SK-N-SH (cell line): ENCODE measurements at regions of chr3 and their contacts with region 1.

Region 1: GRCh38 chr3:128969993-128970739 is 23.7 kb downstream of the CFAP92 start:
- DNase-seq: peak; percentile 67
- H3K4me3 ChIP-seq: no peak overlapping the region
- H3K27ac ChIP-seq: no peak overlapping the region
- H3K4me1 ChIP-seq: no peaks in the 10 kb centered on the region; a peak in 1 of 4 replicates
- H3K27me3 ChIP-seq: peaks cover 8% of the 10 kb centered on the region; the same call in 1 of the 2 replicates
- CTCF ChIP-seq: peak; percentile 97
- EP300 ChIP-seq: no peak
- RAD21 ChIP-seq: peak; percentile 95

Region 2: DNA sequence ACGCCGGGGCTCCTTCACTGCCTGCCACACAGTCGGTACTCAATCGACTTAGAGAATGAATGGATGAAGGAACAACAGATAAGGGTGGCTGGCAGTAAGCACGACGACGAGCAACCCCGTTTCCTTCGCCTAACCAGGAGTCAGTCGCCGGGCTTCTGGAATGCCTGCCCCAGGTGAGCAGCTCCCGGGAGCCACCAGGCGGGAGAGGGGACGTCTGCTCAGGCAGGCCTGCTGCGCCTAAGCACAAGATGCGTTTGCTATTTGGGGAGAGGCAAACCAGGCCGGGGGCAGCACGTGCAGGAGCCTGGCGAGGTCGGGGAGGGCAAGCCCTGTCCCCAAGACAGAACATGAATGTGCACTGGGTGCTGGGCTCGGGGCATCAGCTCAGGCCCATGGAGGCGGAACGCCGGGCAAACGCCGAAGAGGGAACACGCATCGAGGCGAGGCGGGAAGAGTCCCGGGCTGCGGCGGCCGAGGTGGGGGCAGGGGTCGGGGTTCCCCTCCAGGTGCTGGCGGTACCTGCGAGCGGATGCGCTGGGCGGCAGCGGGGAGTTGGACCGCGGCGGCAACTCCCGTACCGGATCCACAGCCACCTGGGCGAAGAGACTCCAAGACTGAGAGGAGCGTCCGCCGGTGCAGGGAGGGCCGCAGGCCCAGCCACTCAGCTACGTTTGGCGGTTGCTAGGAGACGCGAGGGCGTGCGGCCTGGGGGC is 23.5 kb after region 1 on chr3 and contains the start of gene CFAP92:
- CTCF ChIA-PET with region 1: interaction called, 43 read pairs
- POLR2A ChIA-PET with region 1: no interaction called
- DNase-seq: peak; percentile 97
- H3K4me3 ChIP-seq: peak within 1 kb of the TSS; percentile 43 to 52
- H3K27ac ChIP-seq: no peak within 1 kb of the TSS
- H3K4me1 ChIP-seq: peaks cover 0 to 15% of the 10 kb centered on the region in 2 experiments; a peak in 1 of 4 replicates
- H3K27me3 ChIP-seq: peaks cover 21% of the 10 kb centered on the region
- CTCF ChIP-seq: no peak
- EP300 ChIP-seq: no peak
- RAD21 ChIP-seq: no peak
- polyA plus RNA-seq, gene CFAP92: not detected in 2 replicates

Region 3: GRCh38 chr3:129039271-129040038 is 69.3 kb after region 1 on chr3:
- CTCF ChIA-PET with region 1: interaction called, 17 read pairs
- POLR2A ChIA-PET with region 1: no interaction called
- DNase-seq: peak; percentile 88
- H3K4me3 ChIP-seq: no peak overlapping the region; a peak in 1 of 4 replicates
- H3K27ac ChIP-seq: peak overlapping the region in 1 of 2 experiments; percentile 43; a peak in 1 of 4 replicates
- H3K4me1 ChIP-seq: peaks cover 0 to 15% of the 10 kb centered on the region in 2 experiments; a peak in 1 of 4 replicates
- H3K27me3 ChIP-seq: peaks cover 5% of the 10 kb centered on the region; the same call in 1 of the 2 replicates
- CTCF ChIP-seq: no peak
- EP300 ChIP-seq: no peak
- RAD21 ChIP-seq: no peak

Region 4: GRCh38 chr3:129095285-129095684 is 125.1 kb after region 1 on chr3:
- CTCF ChIA-PET with region 1: interaction called, 18 read pairs
- POLR2A ChIA-PET with region 1: no interaction called
- DNase-seq: no peak
- H3K4me3 ChIP-seq: no peak overlapping the region
- H3K27ac ChIP-seq: no peak overlapping the region
- H3K4me1 ChIP-seq: no peaks in the 10 kb centered on the region
- H3K27me3 ChIP-seq: no peaks in the 10 kb centered on the region
- CTCF ChIP-seq: no peak
- EP300 ChIP-seq: no peak
- RAD21 ChIP-seq: no peak

Region 5: GRCh38 chr3:129132097-129132866 is 162.1 kb after region 1 on chr3:
- CTCF ChIA-PET with region 1: interaction called, 14 read pairs
- POLR2A ChIA-PET with region 1: no interaction called
- DNase-seq: no peak
- H3K4me3 ChIP-seq: no peak overlapping the region
- H3K27ac ChIP-seq: no peak overlapping the region
- H3K4me1 ChIP-seq: no peaks in the 10 kb centered on the region
- H3K27me3 ChIP-seq: no peaks in the 10 kb centered on the region
- CTCF ChIP-seq: no peak
- EP300 ChIP-seq: no peak
- RAD21 ChIP-seq: no peak

Region 6: GRCh38 chr3:129240436-129240835 is 270.3 kb after region 1 on chr3:
- CTCF ChIA-PET with region 1: interaction called, 140 read pairs
- POLR2A ChIA-PET with region 1: no interaction called
- DNase-seq: no peak
- H3K4me3 ChIP-seq: no peak overlapping the region
- H3K27ac ChIP-seq: no peak overlapping the region
- H3K4me1 ChIP-seq: peaks cover 0 to 14% of the 10 kb centered on the region in 2 experiments; a peak in 1 of 4 replicates
- H3K27me3 ChIP-seq: no peaks in the 10 kb centered on the region
- CTCF ChIP-seq: no peak
- EP300 ChIP-seq: no peak
- RAD21 ChIP-seq: no peak